ENCODE measurements at regions of chr3 and their contacts with region 1.

Region 1: DNA sequence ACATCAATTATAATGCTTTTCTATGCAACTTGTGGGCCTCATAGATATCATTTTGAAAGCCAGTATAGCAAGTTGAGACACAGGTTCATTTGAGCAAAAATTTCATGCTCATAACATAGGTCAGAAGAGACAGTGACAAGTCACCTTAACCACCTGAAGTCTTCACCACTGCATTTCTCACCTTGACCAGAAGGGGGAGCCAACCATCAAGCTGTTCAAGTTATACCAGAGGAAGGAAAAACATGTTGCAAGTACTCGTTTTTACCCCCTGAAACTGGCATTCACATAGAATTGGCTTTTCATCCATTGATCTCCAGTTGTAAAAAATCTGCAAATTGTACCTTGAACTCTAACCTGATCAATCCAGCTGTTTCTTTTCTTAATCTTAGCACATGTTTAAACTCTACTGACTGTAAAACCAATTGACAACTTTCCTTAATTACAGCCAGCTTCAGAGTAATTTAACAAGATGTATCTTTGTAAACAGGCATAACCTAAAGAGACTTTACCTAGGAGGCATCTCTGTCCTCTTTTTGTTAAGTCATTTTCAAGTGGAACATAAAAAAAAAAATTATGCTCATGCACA is 1.4 kb downstream of the LMOD3 start:
- DNase-seq: peak; percentile 22
- ATAC-seq: peak; percentile 87
- H3K4me3 Mint-ChIP-seq: no peak overlapping the region
- H3K27ac Mint-ChIP-seq: no peak overlapping the region
- H3K4me1 Mint-ChIP-seq: peaks cover 4% of the 10 kb centered on the region
- H3K27me3 Mint-ChIP-seq: no peaks in the 10 kb centered on the region
- CTCF ChIP-seq: peak; percentile 99

Region 2: DNA sequence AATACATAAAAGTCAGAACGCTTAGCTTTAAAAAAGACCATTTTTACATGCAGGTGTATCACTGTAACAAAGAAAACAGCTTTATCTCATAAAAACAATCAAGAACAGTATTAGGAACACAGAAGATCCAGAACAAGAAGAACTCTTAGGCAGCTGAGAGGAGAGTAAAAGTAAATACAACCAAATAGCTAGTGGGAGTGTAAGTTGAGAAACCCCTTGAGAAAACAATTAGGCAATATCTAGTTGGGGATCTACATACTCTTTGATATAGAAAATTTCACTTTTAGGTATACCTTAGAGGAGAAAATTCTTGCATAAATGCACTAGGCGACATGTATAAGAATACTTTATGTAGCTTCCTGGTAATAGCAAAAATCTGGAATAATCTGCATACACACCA is 76.4 kb before region 1 on chr3:
- CTCF ChIA-PET with region 1: no interaction called
- POLR2A ChIA-PET with region 1: no interaction called
- intact Hi-C with region 1: loop called (anchors 2 kb)
- DNase-seq: no peak
- ATAC-seq: no peak
- H3K4me3 Mint-ChIP-seq: no peak overlapping the region
- H3K27ac Mint-ChIP-seq: no peak overlapping the region
- H3K4me1 Mint-ChIP-seq: peaks cover 29% of the 10 kb centered on the region
- H3K27me3 Mint-ChIP-seq: no peaks in the 10 kb centered on the region
- CTCF ChIP-seq: no peak

Region 3: DNA sequence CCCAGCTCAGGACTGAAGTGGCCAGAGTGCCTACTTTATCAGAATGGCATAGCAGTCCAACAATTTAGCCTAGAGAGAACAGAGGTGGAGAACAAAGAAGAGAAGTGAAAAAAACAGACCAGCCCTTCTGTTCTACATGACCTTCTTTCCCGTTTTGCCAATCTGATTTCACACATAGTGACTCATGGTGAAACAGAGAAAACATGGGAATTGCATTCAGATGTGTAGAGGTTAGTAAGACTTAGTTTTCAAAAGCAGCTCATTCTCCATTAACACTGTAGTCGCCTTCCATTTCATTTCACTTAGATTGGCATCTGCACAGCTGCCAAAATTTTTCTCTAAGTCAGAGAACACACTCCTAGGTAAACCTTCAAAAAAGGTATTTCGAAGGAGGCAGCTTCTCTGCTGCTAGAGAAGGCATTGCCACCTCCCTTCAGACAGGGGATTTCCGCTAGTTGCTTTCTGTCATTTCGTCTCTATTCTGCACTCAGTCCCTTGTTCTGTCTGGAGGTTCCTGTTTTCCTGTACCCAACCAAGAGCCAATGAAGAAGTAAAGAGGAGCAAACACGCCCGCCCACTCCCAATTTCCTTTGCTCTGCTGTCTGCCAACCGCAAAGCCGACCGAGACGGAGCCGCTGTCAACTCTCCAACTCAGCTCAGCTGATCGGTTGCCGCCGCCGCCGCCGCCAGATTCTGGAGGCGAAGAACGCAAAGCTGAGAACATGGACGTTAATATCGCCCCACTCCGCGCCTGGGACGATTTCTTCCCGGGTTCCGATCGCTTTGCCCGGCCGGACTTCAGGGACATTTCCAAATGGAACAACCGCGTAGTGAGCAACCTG is 36.4 kb before region 1 on chr3 and contains the start of gene ARL6IP5:
- CTCF ChIA-PET with region 1: interaction called, 15 read pairs
- POLR2A ChIA-PET with region 1: interaction called, 5 read pairs
- intact Hi-C with region 1: loop called (anchors 2 kb)
- DNase-seq: peak; percentile 76
- ATAC-seq: peak; percentile 72
- H3K4me3 Mint-ChIP-seq: peak within 1 kb of the TSS; percentile 96
- H3K27ac Mint-ChIP-seq: peak within 1 kb of the TSS; percentile 95
- H3K4me1 Mint-ChIP-seq: peaks cover 81% of the 10 kb centered on the region
- H3K27me3 Mint-ChIP-seq: no peaks in the 10 kb centered on the region
- CTCF ChIP-seq: no peak
- total RNA-seq, gene ARL6IP5: 77.5 and 77.8 TPM in 2 replicates

Region 4: DNA sequence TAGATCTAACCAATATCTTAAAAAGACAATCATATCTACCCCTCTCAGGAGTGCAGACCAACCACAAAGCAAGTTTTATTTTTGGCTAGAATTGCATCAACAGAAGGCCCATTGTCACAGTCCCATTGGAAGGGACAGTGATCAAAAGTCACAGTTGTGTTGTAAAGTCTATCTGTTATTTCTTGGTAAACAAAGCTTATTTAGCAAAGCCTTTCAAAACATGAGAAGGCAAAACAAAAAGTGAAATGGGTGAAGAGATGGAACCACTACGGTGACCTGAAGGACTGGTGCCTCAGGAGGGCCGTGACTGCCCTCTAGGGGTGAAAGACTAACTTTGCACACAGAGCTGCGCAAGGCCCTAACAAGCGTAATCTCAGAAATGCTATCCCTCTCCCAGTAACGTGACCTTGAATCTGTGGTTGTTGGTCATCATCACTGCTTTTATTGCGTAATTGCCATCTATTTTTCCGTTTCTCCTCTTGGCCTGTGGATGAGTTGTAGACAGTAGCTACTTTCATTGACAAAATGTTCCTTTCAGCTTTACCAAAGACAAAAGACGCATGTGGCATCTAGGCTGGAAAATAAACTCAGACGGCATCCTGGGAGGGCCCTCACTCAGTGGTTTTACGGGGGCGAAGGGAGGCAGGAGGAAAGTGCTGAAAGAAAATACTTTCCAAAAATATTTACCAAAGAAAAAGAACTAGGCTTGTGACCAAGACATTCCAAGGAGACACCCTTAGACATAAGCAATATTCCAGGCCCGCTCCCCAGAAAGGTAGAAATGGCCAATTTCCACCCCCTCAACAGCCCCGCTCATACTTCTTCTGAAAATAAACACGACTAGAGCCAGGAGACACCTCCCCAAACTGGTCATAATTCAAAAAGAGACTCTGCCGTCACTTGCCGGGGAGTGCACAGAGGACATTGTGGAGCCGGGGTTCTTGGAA is 185.5 kb after region 1 on chr3:
- CTCF ChIA-PET with region 1: interaction called, 31 read pairs
- POLR2A ChIA-PET with region 1: no interaction called
- intact Hi-C with region 1: loop called (anchors 1 kb)
- DNase-seq: peak; percentile 20
- ATAC-seq: peak; percentile 91
- H3K4me3 Mint-ChIP-seq: no peak overlapping the region
- H3K27ac Mint-ChIP-seq: no peak overlapping the region
- H3K4me1 Mint-ChIP-seq: peaks cover 7% of the 10 kb centered on the region
- H3K27me3 Mint-ChIP-seq: no peaks in the 10 kb centered on the region
- CTCF ChIP-seq: no peak

Region 5: DNA sequence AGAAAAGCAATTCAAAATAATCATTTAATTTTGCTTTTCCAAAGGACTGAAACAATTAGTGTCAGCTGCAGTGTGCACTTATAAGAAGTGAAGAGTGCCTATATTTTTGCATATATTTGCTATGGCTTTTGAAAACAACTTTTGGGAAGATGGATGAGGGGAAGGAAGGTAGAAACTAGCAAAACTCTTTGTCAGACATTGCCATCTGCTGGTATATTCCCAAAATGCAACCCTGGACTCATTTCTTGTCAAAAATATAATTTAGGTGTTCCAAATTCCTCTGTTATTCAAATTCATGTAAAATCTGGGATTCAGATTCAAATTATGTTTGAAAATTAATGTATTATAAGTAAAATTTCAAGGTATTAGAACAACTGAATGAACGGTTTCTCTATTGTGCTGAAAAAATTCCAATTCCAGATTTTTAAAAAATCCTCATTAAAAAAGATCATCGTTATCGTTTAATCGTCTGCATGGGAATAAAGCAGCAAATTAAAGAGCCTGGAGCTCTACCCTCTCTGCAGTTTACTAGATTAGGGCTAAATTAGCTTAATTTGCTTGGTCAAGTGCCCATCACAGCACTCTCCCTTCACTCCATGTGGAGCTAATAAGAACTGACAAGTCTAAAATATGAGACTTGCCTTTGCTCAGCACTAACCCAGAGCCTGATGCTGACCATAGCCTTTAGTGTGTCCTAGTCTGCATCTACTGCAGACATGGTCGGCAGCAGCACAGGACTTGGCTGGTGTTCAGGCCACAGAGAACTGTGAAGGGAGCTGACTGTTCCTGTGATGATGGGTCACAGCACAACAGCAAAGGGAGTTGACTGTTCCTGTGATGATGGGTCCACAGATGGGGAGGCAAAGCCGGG is 550.3 kb after region 1 on chr3:
- CTCF ChIA-PET with region 1: no interaction called
- POLR2A ChIA-PET with region 1: no interaction called
- intact Hi-C with region 1: loop called (anchors 2 kb)
- DNase-seq: no peak
- ATAC-seq: no peak
- H3K4me3 Mint-ChIP-seq: no peak overlapping the region
- H3K27ac Mint-ChIP-seq: no peak overlapping the region
- H3K4me1 Mint-ChIP-seq: no peaks in the 10 kb centered on the region
- H3K27me3 Mint-ChIP-seq: no peaks in the 10 kb centered on the region
- CTCF ChIP-seq: no peak